Adrenal gland (tissue), 19 donors: ENCODE measurements at regions of chr13 and their contacts with region 1.

Region 1: DNA sequence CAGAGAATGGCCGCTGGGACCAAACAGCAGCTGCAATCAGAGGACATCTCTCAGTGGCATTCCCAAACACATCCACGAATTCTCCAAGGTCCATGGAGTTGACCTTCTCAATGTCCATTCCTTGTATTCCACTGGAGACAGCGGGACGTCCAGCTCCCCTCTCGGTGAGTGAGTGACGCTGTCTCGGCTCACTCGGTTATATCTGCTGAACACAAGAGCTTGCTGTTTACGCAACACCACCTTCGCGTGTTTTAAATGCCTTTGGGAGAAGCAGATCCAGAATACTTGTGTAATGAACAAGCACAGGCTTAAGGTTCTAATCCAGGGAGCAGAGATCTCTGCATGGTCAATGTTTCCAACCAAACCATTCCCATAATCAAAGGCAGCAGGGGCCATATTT is at the start of gene URAD:
- DNase-seq: no peak
- H3K4me3 ChIP-seq: no peak within 1 kb of the TSS
- H3K27ac ChIP-seq: no peak within 1 kb of the TSS
- H3K4me1 ChIP-seq: no peaks in the 10 kb centered on the region
- H3K27me3 ChIP-seq: peaks cover 5% of the 10 kb centered on the region
- CTCF ChIP-seq: no peak
- POLR2A ChIP-seq: no peak
- total RNA-seq, gene URAD: not detected

Region 2: GRCh38 chr13:27374650-27375049 is 613.9 kb before region 1 on chr13:
- intact Hi-C with region 1: loop called (anchors 5 to 10 kb)
- DNase-seq: peak; percentile 47 to 86 (median 69)
- H3K4me3 ChIP-seq: no peak overlapping the region
- H3K27ac ChIP-seq: no peak overlapping the region
- H3K4me1 ChIP-seq: no peaks in the 10 kb centered on the region
- H3K27me3 ChIP-seq: peaks cover 25% of the 10 kb centered on the region
- CTCF ChIP-seq: peak; percentile 44 to 70 (median 62)
- POLR2A ChIP-seq: no peak

Region 3: GRCh38 chr13:27658546-27658945 is 330.0 kb before region 1 on chr13:
- intact Hi-C with region 1: no loop called
- DNase-seq: no peak
- H3K4me3 ChIP-seq: no peak overlapping the region
- H3K27ac ChIP-seq: no peak overlapping the region
- H3K4me1 ChIP-seq: no peaks in the 10 kb centered on the region
- H3K27me3 ChIP-seq: no peaks in the 10 kb centered on the region
- CTCF ChIP-seq: no peak
- POLR2A ChIP-seq: no peak

Region 4: DNA sequence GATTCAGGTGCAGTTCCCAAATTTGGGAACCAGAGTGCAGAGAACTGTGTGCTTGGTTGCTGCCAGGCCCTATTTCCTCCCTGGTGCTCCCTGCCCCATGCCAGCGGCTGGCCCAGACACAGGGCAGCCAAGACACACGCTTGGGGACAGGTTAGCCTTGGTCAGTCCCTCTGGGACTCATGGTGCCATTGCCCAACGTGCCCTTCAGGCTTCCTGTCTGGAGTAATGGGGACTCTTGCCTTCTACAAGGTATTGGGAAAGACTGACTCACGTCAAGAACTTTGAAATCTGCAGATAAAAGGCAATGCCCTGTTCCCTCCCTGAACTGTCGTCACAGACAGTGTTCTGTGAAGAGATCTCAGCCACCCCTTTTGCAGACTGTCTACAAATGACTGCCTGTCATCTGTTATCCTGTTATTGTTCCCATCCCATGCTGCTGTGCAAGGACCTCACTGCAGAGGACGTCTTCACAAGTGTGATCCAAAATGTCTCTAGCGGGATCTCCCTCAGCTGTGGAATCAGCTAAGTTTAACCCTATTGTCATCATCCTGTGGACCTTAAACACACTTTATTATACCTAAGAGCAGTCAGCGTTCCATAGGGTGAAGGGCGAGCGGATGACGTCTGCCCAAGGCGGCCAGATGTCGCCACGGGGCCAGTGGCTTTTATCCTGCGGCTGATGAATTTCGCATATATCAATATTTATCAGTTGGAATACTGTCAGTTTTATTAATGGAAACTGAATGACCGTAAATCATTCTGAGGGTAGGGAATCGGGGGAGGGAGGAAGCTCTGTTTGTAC is 137.3 kb before region 1 on chr13:
- intact Hi-C with region 1: no loop called
- DNase-seq: no peak
- H3K4me3 ChIP-seq: no peak overlapping the region
- H3K27ac ChIP-seq: no peak overlapping the region
- H3K4me1 ChIP-seq: no peaks in the 10 kb centered on the region
- H3K27me3 ChIP-seq: peaks cover 9% of the 10 kb centered on the region
- CTCF ChIP-seq: no peak
- POLR2A ChIP-seq: no peak

Region 5: GRCh38 chr13:28204690-28205443 is 216.3 kb after region 1 on chr13:
- intact Hi-C with region 1: no loop called
- DNase-seq: no peak
- H3K4me3 ChIP-seq: no peak overlapping the region
- H3K27ac ChIP-seq: no peak overlapping the region
- H3K4me1 ChIP-seq: no peaks in the 10 kb centered on the region
- H3K27me3 ChIP-seq: no peaks in the 10 kb centered on the region
- CTCF ChIP-seq: no peak
- POLR2A ChIP-seq: no peak